Activated T-helper 1 cell treated with anti-CD3 and anti-CD28 coated beads, Interleukin-12 subunit alpha, Interleukin-12 subunit beta, Interleukin-2, Interleukin-4 antibody, amounts not matched to agents 30 ng/mL and 10 ng/mL and 1 ng/mL, durations not matched to agents 14 hours and 24 hours and 36 hours (primary cell): ENCODE measurements at regions of chr6 and their contacts with region 1.

Region 1: GRCh38 chr6:33147807-33148666 is 44.2 kb downstream of the COL11A2 start:
- DNase-seq: no peak
- H3K4me3 Mint-ChIP-seq: no peak overlapping the region
- H3K27ac Mint-ChIP-seq: no peak overlapping the region
- H3K4me1 Mint-ChIP-seq: peaks cover 4% of the 10 kb centered on the region
- H3K27me3 Mint-ChIP-seq: peaks cover 13% of the 10 kb centered on the region

Region 2: GRCh38 chr6:33118525-33119123 is 29.4 kb before region 1 on chr6:
- intact Hi-C with region 1: loop called (anchors 1 kb)
- DNase-seq: no peak
- H3K4me3 Mint-ChIP-seq: no peak overlapping the region
- H3K27ac Mint-ChIP-seq: no peak overlapping the region
- H3K4me1 Mint-ChIP-seq: peaks cover 15% of the 10 kb centered on the region
- H3K27me3 Mint-ChIP-seq: peaks cover 68% of the 10 kb centered on the region

Region 3: DNA sequence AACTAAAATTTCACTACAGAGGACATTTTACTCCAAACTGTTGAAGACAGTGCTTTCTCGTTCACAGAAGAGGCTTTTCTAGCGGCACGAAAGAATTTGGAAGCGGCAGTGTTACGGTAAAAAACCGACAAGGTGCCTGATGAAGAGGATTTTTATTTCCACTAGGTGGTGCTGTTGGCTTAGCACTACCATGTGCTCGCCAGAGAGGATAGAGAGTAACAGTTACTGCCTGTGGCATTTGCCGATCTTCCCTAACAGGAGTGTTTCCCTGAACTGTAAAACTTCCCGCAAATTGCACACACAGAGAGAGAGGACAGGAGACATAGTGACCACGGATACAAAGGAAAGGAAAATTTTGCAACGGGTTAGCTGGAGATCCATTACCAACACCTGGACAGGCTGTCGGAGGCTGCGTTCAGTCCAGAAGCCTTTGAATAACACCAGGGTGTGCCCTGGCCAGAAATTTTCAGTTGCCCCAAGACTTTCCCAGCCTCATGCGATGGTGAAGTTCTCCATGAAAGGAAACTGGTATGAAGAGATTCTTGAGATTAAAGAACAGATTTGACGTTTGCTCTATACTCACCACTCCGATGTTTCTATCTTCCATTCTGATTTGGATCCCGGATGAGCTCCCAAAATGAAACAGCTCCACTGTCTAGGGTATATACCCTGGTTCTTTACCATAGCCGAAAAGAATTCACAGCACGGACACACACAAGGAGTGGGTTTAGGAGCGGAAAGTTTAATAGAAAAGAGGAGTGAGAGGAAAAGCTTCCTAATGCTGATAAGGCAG is 24.1 kb before region 1 on chr6:
- intact Hi-C with region 1: loop called (anchors 1 kb)
- DNase-seq: no peak
- H3K4me3 Mint-ChIP-seq: no peak overlapping the region
- H3K27ac Mint-ChIP-seq: no peak overlapping the region
- H3K4me1 Mint-ChIP-seq: peaks cover 19% of the 10 kb centered on the region
- H3K27me3 Mint-ChIP-seq: peaks cover 26% of the 10 kb centered on the region

Region 4: GRCh38 chr6:33192105-33192646 is 44.1 kb after region 1 on chr6 and contains the start of gene COL11A2:
- intact Hi-C with region 1: no loop called
- DNase-seq: no peak
- H3K4me3 Mint-ChIP-seq: no peak within 1 kb of the TSS
- H3K27ac Mint-ChIP-seq: no peak within 1 kb of the TSS
- H3K4me1 Mint-ChIP-seq: peaks cover 19% of the 10 kb centered on the region
- H3K27me3 Mint-ChIP-seq: peaks cover 42% of the 10 kb centered on the region
- total RNA-seq, gene COL11A2: 0.61 and 0.65 TPM in 2 replicates